ENCODE measurements at regions of chr1 and their contacts with region 1.

Region 1: GRCh38 chr1:225642177-225642576 is 10.7 kb downstream of the ENAH start:
- DNase-seq: no peak
- ATAC-seq: peak in 1 of 4 donors; percentile 30
- H3K4me3 ChIP-seq: no peak overlapping the region
- H3K27ac ChIP-seq: peak overlapping the region in 1 of 12 donors; percentile 1
- H3K4me1 ChIP-seq: peaks cover 0 to 21% (median 2%) of the 10 kb centered on the region in 12 donors
- H3K27me3 ChIP-seq: no peaks in the 10 kb centered on the region
- CTCF ChIP-seq: no peak
- POLR2A ChIP-seq: no peak

Region 2: DNA sequence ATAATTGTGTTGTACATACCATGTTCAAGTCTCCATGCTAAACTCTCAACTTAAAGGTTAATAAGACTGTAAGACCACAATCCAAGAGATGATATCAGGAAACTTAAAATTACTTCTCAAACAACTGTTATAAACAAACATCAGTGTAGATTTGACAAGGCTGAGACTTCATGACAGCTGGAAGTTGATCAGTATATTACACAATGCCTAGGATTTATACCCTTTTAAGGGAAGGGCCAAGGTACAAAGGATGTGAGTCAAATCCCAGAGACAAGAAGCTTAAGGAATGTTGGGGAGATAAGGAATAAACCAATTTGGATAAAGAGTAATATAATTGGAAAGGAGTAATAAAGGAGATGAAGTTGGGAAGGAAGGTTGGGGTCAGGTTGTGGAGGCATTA is 313.1 kb before region 1 on chr1:
- intact Hi-C with region 1: no loop called
- DNase-seq: no peak
- ATAC-seq: no peak
- H3K4me3 ChIP-seq: no peak overlapping the region
- H3K27ac ChIP-seq: no peak overlapping the region
- H3K4me1 ChIP-seq: no peaks in the 10 kb centered on the region
- H3K27me3 ChIP-seq: peaks cover 0 to 6% (median 0%) of the 10 kb centered on the region in 9 donors
- CTCF ChIP-seq: no peak
- POLR2A ChIP-seq: no peak

Region 3: GRCh38 chr1:225567590-225568194 is 74.5 kb before region 1 on chr1:
- intact Hi-C with region 1: loop called in 1 of 10 experiments (anchors 10 kb)
- DNase-seq: no peak
- ATAC-seq: no peak
- H3K4me3 ChIP-seq: no peak overlapping the region
- H3K27ac ChIP-seq: no peak overlapping the region
- H3K4me1 ChIP-seq: peaks cover 0 to 46% (median 2%) of the 10 kb centered on the region in 12 donors
- H3K27me3 ChIP-seq: no peaks in the 10 kb centered on the region
- CTCF ChIP-seq: peak in 5 of 12 donors; percentile 9 to 41 (median 22)
- POLR2A ChIP-seq: no peak

Region 4: DNA sequence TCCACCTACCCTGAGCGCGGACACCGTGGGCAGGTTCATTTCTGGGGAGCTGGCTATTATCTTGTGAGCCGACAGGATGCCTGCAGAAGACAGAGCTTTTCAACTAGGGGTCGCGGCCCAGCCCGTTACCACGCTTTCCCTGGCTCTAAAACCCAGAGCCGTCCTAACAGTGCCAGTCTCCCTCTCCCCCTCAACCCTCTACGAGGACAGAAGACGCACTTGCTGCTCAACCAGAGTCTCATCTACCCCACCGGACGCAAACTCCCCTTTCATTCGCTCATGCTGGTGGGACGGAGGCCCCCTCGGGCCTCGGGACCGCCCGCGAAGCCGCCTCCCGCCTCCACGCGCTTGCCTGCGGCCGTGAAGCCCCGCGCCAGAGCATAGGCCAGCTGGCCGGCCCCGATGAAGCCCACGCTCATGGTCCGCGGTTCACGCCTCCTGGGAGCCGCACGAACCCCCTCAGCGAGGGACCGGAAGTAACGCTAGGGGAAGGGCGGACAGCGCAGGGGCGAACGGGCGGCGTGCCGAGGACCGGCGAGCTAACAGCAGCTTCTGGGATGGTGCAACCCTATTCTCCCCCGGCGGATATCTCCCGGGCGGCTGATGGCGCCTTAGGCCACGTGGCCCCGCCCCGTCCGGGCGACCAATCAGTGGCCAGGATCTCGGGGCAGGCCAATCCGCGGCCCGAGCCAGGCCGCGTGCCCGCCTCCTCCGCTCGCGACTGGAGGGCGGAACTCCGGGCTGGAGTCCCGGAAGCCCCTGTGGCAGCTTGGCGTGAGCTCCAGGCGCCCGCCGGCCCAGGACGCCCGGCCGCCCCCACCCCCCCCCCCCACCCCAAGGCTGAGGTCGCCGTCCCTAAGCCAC is 281.7 kb after region 1 on chr1 and contains the start of gene PYCR2:
- intact Hi-C with region 1: no loop called
- DNase-seq: peak; percentile 95 to 98 (median 97)
- ATAC-seq: peak; percentile 99 to 100 (median 100)
- H3K4me3 ChIP-seq: peak within 1 kb of the TSS; percentile 52 to 96 (median 82)
- H3K27ac ChIP-seq: peak within 1 kb of the TSS; percentile 67 to 97 (median 93)
- H3K4me1 ChIP-seq: peaks cover 0 to 42% (median 19%) of the 10 kb centered on the region in 12 donors
- H3K27me3 ChIP-seq: no peaks in the 10 kb centered on the region
- CTCF ChIP-seq: peak in 2 of 12 donors; percentile 8 to 11
- POLR2A ChIP-seq: peak in 1 of 2 donors; percentile 96
- total RNA-seq, gene PYCR2: 53.6 to 82.4 (median 65.1) TPM

Measured in heart left ventricle (tissue), 16 donors.